Activated naive CD4-positive, alpha-beta T cell treated with anti-CD3 and anti-CD28 coated beads, Interleukin-2, amount 10 ng/mL, durations not matched to agents 7 days and 5 days (primary cell): ENCODE measurements at regions of chr17 and their contacts with region 1.

Region 1: GRCh38 chr17:19766422-19767270 is 18.5 kb upstream of the ALDH3A1 start:
- DNase-seq: peak; percentile 83
- H3K4me3 Mint-ChIP-seq: no peak overlapping the region
- H3K27ac Mint-ChIP-seq: peak overlapping the region; percentile 67
- H3K4me1 Mint-ChIP-seq: peaks cover 47% of the 10 kb centered on the region
- H3K27me3 Mint-ChIP-seq: peaks cover 19% of the 10 kb centered on the region

Region 2: GRCh38 chr17:19362277-19363113 is 404.2 kb before region 1 on chr17 and contains the start of gene B9D1:
- CTCF ChIA-PET with region 1: interaction called, 29 read pairs
- DNase-seq: peak; percentile 94
- H3K4me3 Mint-ChIP-seq: peak within 1 kb of the TSS; percentile 82
- H3K27ac Mint-ChIP-seq: peak within 1 kb of the TSS; percentile 78
- H3K4me1 Mint-ChIP-seq: peaks cover 26% of the 10 kb centered on the region
- H3K27me3 Mint-ChIP-seq: peaks cover 74% of the 10 kb centered on the region

Region 3: DNA sequence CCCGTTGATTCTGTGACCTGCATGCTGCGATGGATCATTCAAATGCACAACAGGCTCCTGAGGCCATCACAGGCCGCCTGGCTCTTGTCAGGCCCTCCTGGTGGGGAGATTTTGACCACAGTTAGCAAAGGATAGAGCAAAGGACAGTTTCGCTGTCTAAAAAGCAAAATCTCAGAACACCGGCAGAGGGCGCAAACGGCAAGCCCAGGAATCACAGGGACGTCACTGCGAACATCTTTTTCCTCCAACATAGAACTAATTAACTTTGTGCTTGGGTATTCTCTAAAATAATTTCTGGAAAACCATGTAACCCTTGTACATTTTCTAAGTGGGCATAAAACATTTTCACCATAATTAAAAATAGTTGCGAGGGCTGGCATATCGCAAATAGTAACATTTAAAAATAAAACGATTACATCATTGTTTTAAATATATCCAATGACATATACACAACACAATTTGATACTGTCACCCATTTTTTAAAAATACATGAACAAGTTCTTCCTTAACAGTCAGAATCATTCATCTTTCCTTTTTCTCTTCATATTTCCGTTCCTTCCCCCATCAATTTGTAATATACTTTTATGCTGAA is 252.7 kb before region 1 on chr17:
- CTCF ChIA-PET with region 1: interaction called, 46 read pairs
- DNase-seq: peak; percentile 77
- H3K4me3 Mint-ChIP-seq: no peak overlapping the region
- H3K27ac Mint-ChIP-seq: no peak overlapping the region
- H3K4me1 Mint-ChIP-seq: no peaks in the 10 kb centered on the region
- H3K27me3 Mint-ChIP-seq: peaks cover 25% of the 10 kb centered on the region

Region 4: GRCh38 chr17:19648475-19649406 is 117.9 kb before region 1 on chr17 and contains the start of gene ALDH3A2:
- CTCF ChIA-PET with region 1: interaction called, 17 read pairs
- DNase-seq: peak; percentile 96
- H3K4me3 Mint-ChIP-seq: peak within 1 kb of the TSS; percentile 92
- H3K27ac Mint-ChIP-seq: peak within 1 kb of the TSS; percentile 85
- H3K4me1 Mint-ChIP-seq: peaks cover 38% of the 10 kb centered on the region
- H3K27me3 Mint-ChIP-seq: peaks cover 27% of the 10 kb centered on the region

Region 5: GRCh38 chr17:19709841-19710240 is 56.8 kb before region 1 on chr17:
- CTCF ChIA-PET with region 1: no interaction called
- DNase-seq: no peak
- H3K4me3 Mint-ChIP-seq: no peak overlapping the region
- H3K27ac Mint-ChIP-seq: no peak overlapping the region
- H3K4me1 Mint-ChIP-seq: no peaks in the 10 kb centered on the region
- H3K27me3 Mint-ChIP-seq: peaks cover 3% of the 10 kb centered on the region

Region 6: GRCh38 chr17:19753049-19753444 is 13.6 kb before region 1 on chr17:
- CTCF ChIA-PET with region 1: interaction called, 46 read pairs
- DNase-seq: no peak
- H3K4me3 Mint-ChIP-seq: no peak overlapping the region
- H3K27ac Mint-ChIP-seq: no peak overlapping the region
- H3K4me1 Mint-ChIP-seq: peaks cover 2% of the 10 kb centered on the region
- H3K27me3 Mint-ChIP-seq: peaks cover 55% of the 10 kb centered on the region